Heart left ventricle (tissue), 16 donors: ENCODE measurements at regions of chr16 and their contacts with region 1.

Region 1: DNA sequence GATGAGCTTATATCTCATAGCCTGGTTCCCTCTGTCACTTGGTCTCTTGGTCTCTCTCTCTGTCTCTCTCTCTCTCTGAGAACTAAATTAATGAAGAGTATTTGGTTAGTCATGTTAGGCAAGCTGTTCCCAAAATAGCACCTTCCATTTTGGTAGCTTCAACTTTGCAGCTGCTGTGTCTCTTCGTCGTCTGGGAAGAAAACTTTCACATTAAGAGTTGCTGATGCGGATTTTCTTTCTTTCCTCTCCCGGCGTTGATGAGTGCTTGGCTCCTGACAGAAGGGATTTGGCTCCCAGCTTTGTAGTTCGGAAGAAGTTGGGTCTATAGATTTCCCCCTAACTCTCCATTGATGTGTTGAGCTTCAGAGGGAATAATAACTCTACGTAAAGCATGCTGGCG is at the start of gene RBFOX1:
- DNase-seq: no peak
- ATAC-seq: peak; percentile 48 to 72 (median 63)
- H3K4me3 ChIP-seq: peak within 1 kb of the TSS; percentile 19 to 65 (median 54)
- H3K27ac ChIP-seq: peak within 1 kb of the TSS; percentile 63 to 87 (median 81)
- H3K4me1 ChIP-seq: peaks cover 0 to 37% (median 8%) of the 10 kb centered on the region in 12 donors
- H3K27me3 ChIP-seq: no peaks in the 10 kb centered on the region
- CTCF ChIP-seq: no peak
- POLR2A ChIP-seq: peak in 1 of 2 donors; percentile 16
- total RNA-seq, gene RBFOX1: 36.9 to 68.1 (median 49.5) TPM

Region 2: GRCh38 chr16:7004266-7004665 is 328.3 kb before region 1 on chr16:
- intact Hi-C with region 1: no loop called
- DNase-seq: no peak
- ATAC-seq: no peak
- H3K4me3 ChIP-seq: no peak overlapping the region
- H3K27ac ChIP-seq: no peak overlapping the region
- H3K4me1 ChIP-seq: no peaks in the 10 kb centered on the region
- H3K27me3 ChIP-seq: no peaks in the 10 kb centered on the region
- CTCF ChIP-seq: no peak
- POLR2A ChIP-seq: no peak

Region 3: DNA sequence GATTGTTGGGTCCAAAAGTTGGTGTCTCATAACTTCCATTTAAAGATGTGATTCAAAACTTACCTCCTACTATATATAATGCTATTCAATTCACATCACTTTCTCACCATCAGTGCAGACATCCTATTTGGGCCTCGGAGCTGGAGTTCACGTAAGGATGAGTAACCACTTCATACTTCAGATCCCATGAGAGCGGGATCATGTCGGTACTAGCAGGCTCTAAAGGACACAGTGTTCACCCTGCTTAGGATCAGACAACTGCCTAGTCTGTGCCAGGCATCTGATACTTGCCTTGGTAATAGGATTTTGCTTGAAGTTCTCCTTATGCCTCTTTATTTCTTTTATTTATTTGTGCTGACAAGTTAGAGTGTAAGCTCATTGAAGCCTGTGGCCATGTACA is 39.5 kb after region 1 on chr16:
- intact Hi-C with region 1: loop called in 4 of 10 experiments (anchors 5 kb)
- DNase-seq: no peak
- ATAC-seq: peak; percentile 80 to 90 (median 84)
- H3K4me3 ChIP-seq: no peak overlapping the region
- H3K27ac ChIP-seq: peak overlapping the region in 6 of 12 donors; percentile 13 to 73 (median 21)
- H3K4me1 ChIP-seq: peaks cover 0 to 47% (median 3%) of the 10 kb centered on the region in 12 donors
- H3K27me3 ChIP-seq: no peaks in the 10 kb centered on the region
- CTCF ChIP-seq: no peak
- POLR2A ChIP-seq: no peak

Region 4: GRCh38 chr16:7378024-7378695 is 45.5 kb after region 1 on chr16:
- intact Hi-C with region 1: loop called in 4 of 10 experiments (anchors 5 kb)
- DNase-seq: no peak
- ATAC-seq: peak in 2 of 4 donors; percentile 10 to 16
- H3K4me3 ChIP-seq: no peak overlapping the region
- H3K27ac ChIP-seq: peak overlapping the region in 5 of 12 donors; percentile 5 to 30 (median 21)
- H3K4me1 ChIP-seq: peaks cover 0 to 57% (median 6%) of the 10 kb centered on the region in 12 donors
- H3K27me3 ChIP-seq: no peaks in the 10 kb centered on the region
- CTCF ChIP-seq: no peak
- POLR2A ChIP-seq: no peak

Region 5: DNA sequence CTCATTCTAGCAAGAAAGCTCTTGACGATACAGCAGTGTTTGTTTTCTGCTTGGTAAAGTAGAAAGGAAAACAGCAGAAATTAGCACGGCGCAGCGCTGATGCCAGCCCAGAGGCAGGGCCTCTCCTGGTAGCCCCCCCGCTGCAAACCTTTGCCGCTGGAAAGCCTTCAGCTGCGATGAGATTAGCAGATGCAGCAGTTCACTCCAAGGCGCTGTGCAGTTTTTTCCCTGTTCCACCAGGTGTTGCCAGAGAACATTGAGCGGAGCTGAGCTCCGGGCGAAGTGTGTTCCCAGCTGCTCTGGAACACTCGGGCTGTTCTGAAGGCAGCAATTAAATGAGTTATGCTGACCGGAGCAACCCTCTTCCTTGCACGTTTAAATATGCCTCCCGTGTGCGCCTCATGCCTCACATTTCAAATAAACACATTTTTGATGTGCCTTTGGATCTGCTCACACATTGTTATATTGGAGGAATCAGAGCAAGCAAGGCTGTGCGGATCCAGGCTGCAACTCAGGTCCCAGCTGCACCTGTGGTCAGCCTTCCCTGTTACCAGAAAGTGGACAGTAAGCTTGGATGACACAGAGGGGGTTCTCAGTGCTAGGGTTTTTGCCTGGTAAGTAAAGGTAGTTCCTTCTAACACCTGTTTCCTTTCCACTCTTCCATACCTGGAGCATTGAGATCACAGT is 72.7 kb after region 1 on chr16:
- intact Hi-C with region 1: loop called in 2 of 10 experiments (anchors 2 to 10 kb)
- DNase-seq: peak; percentile 47 to 81 (median 66)
- ATAC-seq: peak; percentile 92 to 95 (median 94)
- H3K4me3 ChIP-seq: peak overlapping the region in 3 of 12 donors; percentile 11 to 27 (median 26)
- H3K27ac ChIP-seq: peak overlapping the region in 3 of 12 donors; percentile 8 to 56 (median 39)
- H3K4me1 ChIP-seq: peaks cover 0 to 21% (median 0%) of the 10 kb centered on the region in 12 donors
- H3K27me3 ChIP-seq: no peaks in the 10 kb centered on the region
- CTCF ChIP-seq: peak in 11 of 12 donors; percentile 21 to 62 (median 46)
- POLR2A ChIP-seq: no peak

Region 6: GRCh38 chr16:7474408-7474807 is 141.8 kb after region 1 on chr16:
- intact Hi-C with region 1: no loop called
- DNase-seq: no peak
- ATAC-seq: no peak
- H3K4me3 ChIP-seq: no peak overlapping the region
- H3K27ac ChIP-seq: no peak overlapping the region
- H3K4me1 ChIP-seq: peaks cover 0 to 3% (median 0%) of the 10 kb centered on the region in 12 donors
- H3K27me3 ChIP-seq: no peaks in the 10 kb centered on the region
- CTCF ChIP-seq: no peak
- POLR2A ChIP-seq: no peak

Region 7: DNA sequence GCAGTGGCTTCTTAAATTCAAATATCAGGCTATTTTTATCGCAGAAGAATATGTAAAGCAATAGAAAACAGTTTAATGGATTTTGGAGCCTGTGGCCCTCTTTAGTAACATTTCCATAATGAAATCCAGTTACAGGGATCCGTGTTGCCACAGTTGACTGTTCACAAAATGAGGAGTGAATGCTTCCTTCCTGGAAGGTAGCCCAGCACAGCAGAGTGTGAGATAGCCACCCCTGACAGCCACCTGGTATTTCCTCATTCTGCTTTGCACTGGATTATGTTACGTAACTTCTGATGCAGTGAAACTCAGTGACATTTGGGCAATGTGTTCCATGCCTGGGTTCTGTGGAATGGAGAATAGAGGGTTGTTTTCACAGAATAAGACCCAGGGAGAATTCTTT is 517.2 kb after region 1 on chr16:
- intact Hi-C with region 1: no loop called
- DNase-seq: no peak
- ATAC-seq: no peak
- H3K4me3 ChIP-seq: no peak overlapping the region
- H3K27ac ChIP-seq: no peak overlapping the region
- H3K4me1 ChIP-seq: no peaks in the 10 kb centered on the region
- H3K27me3 ChIP-seq: peaks cover 0 to 7% (median 0%) of the 10 kb centered on the region in 9 donors
- CTCF ChIP-seq: no peak
- POLR2A ChIP-seq: no peak